ENCODE measurements at regions of chr15 and their contacts with region 1.

Region 1: DNA sequence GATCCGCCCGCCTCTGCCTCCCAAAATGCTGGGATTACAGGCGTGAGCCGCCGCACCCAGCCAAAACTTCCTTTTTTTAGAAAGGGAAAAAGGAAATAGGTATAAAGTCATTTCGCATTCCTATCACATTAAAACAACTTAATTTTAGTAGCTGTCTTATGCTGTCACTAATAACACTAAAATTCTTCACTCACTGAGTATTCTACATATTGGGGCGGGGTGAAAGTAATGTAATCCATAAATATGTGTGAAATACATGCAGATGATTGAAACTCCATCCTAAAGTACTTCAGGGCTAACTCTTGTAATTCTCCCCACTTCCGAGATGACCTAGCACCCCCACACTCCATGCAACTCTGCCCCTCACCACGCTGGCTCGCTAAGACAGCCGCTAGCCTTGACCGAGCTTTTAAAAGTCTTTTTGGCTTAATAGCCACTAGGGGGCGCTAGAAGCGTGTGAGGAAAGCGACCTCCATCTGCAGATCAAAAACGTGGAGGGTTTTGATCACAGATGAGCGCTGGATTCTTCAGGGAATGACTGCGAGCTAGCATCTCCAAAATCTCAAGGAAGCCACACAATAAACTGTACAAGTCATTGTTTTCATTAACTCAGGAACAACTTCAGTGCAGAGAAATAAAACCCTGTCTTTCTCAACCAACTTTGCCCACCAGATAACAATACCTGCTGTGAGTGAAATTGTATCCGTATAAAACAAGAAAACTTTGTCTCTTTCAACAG is 129.3 kb upstream of the IGF1R start:
- DNase-seq: no peak
- ATAC-seq: peak; percentile 64

Region 2: GRCh38 chr15:98647774-98648653 is 129.0 kb after region 1 on chr15 and contains the start of gene IGF1R:
- intact Hi-C with region 1: loop called (anchors 5 kb)
- DNase-seq: peak; percentile 94
- ATAC-seq: peak; percentile 90
- total RNA-seq, gene IGF1R: 26.3 TPM

Region 3: GRCh38 chr15:98850961-98851573 is 332.1 kb after region 1 on chr15:
- intact Hi-C with region 1: loop called (anchors 1 kb)
- DNase-seq: peak; percentile 82
- ATAC-seq: peak; percentile 72

Region 4: DNA sequence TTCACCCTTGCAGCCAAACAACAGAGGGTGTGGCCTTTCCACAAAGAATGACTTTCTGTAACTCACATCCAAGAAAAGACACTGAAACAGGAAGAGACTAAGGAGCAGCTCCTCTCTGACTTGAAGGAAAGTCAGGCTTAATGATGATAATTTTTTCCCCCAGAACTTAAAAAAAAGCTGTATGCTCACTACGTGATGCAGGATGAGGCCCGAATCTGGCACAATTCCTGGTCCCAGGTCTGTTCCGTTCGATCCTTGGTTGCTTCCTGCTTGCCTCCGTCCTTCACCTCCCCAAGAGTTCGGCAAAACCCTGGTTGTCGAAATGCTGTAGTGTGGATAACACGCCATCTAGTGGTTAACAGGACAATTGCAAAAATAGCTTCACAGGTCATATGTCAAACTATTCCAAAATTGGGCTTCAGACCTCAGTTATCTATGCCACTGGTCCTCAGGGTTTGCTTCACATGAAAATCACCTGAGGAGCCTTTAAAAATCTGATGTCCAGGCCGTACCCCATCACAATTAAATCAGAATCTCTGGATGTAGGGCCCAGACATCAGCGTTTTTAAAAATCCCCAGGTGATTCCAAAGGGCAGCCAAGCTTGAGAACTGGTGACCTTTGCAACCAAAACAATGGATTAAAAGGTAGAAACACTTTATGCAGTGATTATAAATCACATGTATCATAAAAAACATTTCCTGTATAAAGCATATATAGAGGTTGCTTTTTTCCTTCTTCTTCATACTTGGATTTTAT is 557.7 kb after region 1 on chr15:
- intact Hi-C with region 1: loop called (anchors 1 kb)
- DNase-seq: no peak
- ATAC-seq: peak; percentile 87